IMR-90 (cell line): ENCODE measurements at regions of chr4 and their contacts with region 1.

Region 1: GRCh38 chr4:123352240-123352945 is 44.2 kb upstream of the SPRY1 start:
- DNase-seq: peak; percentile 56
- ATAC-seq: 0 out of 2 replicates have a peak, but pooled peaks have one; percentile 48
- H3K4me3 ChIP-seq: no peak overlapping the region
- H3K27ac ChIP-seq: no peak overlapping the region
- H3K4me1 ChIP-seq: peaks cover 3% of the 10 kb centered on the region
- H3K27me3 ChIP-seq: no peaks in the 10 kb centered on the region
- CTCF ChIP-seq: no peak
- POLR2A ChIP-seq: no peak
- RAD21 ChIP-seq: no peak

Region 2: DNA sequence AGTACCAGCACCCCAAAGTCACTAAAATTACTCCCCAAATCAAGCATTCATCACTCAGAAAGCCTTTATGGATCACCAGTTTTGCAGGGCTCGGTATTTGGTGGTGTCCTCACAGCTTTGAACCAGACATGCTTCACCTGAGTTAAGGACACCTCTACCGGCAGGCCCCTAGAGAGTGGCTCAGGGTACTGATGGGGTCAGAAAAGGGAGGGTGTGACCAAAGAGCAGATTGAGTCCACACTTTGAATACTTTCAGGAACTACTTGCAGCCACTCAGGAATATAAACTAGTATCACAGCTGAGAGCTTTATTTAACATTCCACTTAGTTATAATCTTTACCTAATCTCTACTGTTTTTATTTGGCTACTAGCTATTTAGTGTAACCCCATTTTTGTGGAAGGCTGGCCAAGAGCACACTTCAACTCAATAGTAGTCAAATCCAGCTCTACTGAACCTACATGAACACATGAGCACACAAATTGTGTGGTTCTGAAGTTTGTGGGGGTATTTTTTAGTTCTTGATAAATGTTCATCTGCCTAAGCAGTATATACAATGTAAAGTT is 65.4 kb before region 1 on chr4:
- CTCF ChIA-PET with region 1: no interaction called
- POLR2A ChIA-PET with region 1: no interaction called
- dilution Hi-C with region 1: no loop called
- in situ Hi-C with region 1: no loop called
- intact Hi-C with region 1: loop called (anchors 2 kb)
- DNase-seq: no peak
- ATAC-seq: no peak
- H3K4me3 ChIP-seq: no peak overlapping the region
- H3K27ac ChIP-seq: no peak overlapping the region
- H3K4me1 ChIP-seq: no peaks in the 10 kb centered on the region
- H3K27me3 ChIP-seq: no peaks in the 10 kb centered on the region
- CTCF ChIP-seq: no peak
- POLR2A ChIP-seq: no peak
- RAD21 ChIP-seq: no peak

Region 3: GRCh38 chr4:123312951-123313592 is 39.3 kb before region 1 on chr4:
- CTCF ChIA-PET with region 1: interaction called, 10 read pairs
- POLR2A ChIA-PET with region 1: no interaction called
- dilution Hi-C with region 1: no loop called
- in situ Hi-C with region 1: no loop called
- intact Hi-C with region 1: no loop called
- DNase-seq: no peak
- ATAC-seq: no peak
- H3K4me3 ChIP-seq: no peak overlapping the region
- H3K27ac ChIP-seq: no peak overlapping the region
- H3K4me1 ChIP-seq: no peaks in the 10 kb centered on the region
- H3K27me3 ChIP-seq: no peaks in the 10 kb centered on the region
- CTCF ChIP-seq: no peak
- POLR2A ChIP-seq: no peak
- RAD21 ChIP-seq: no peak

Region 4: DNA sequence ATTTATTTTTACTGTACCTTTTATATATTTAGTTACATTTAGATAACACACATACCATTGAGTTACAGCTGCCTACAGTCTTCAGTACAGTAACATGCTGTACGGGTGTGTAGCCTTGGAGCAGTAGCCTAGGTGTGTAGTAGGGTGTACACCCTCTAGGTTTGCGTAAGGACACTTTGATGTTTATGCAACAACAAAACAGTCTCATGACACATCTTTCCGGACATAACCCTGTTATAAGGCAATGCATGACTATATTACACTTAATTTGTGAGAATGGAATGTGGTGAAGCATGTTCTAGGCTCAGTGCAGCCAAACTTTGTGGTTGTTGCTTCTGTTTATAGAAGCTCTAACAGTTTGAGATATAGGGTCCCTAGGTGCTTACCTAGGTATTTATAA is 109.6 kb after region 1 on chr4:
- CTCF ChIA-PET with region 1: no interaction called
- POLR2A ChIA-PET with region 1: no interaction called
- dilution Hi-C with region 1: no loop called
- in situ Hi-C with region 1: no loop called
- intact Hi-C with region 1: no loop called
- DNase-seq: peak; percentile 26
- ATAC-seq: peak; percentile 53
- H3K4me3 ChIP-seq: no peak overlapping the region
- H3K27ac ChIP-seq: no peak overlapping the region
- H3K4me1 ChIP-seq: no peaks in the 10 kb centered on the region
- H3K27me3 ChIP-seq: no peaks in the 10 kb centered on the region
- CTCF ChIP-seq: no peak
- POLR2A ChIP-seq: no peak
- RAD21 ChIP-seq: no peak